Activated CD4-positive, alpha-beta T cell treated with anti-CD3 and anti-CD28 coated beads, Interleukin-2, amount 10 ng/mL, durations not matched to agents 24 days and 14 days (primary cell): ENCODE measurements at regions of chr1 and their contacts with region 1.

Region 1: GRCh38 chr1:100400404-100400803 is 48.1 kb downstream of the CDC14A start:
- DNase-seq: peak; percentile 90
- H3K4me3 Mint-ChIP-seq: peak overlapping the region; percentile 73
- H3K27ac Mint-ChIP-seq: peak overlapping the region; percentile 92
- H3K4me1 Mint-ChIP-seq: peaks cover 69% of the 10 kb centered on the region
- H3K27me3 Mint-ChIP-seq: no peaks in the 10 kb centered on the region

Region 2: DNA sequence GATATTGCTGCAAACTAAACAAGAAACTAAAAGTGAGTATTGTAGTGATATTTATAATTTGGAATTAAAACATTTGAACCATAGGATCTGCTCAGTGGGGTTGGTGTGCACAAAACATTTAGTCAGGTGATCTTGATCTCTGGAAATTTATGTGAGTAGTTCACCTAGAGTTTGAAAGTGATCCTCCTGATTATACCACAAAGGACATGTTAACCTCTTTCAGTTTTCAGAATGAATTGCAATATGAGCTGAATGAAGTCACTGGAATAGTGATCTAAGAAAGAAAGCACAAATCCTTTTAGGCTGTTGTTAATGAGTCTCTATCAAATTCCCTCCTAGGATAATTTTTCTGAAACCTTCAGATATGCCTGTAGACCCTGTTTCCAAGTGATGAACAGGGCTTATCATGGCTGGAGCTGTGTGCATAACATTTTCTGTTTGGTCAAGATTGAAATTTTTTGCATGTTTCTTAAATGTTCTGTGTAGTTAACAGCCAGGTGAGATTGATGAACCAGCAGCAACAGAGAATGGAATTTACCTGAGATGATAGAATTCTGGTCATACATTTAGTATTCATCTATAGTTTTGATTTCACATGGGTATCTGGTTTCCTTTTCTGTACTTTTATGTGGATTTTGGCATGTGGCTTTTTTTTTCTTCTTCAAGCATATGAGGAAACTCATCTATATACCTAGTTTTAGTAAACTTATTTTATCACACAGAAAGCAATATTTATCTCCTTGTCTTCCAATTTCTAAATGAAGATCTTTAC is 22.6 kb before region 1 on chr1:
- intact Hi-C with region 1: loop called (anchors 2 kb)
- DNase-seq: no peak
- H3K4me3 Mint-ChIP-seq: peak overlapping the region; percentile 61
- H3K27ac Mint-ChIP-seq: peak overlapping the region; percentile 88
- H3K4me1 Mint-ChIP-seq: peaks cover 36% of the 10 kb centered on the region
- H3K27me3 Mint-ChIP-seq: no peaks in the 10 kb centered on the region

Region 3: DNA sequence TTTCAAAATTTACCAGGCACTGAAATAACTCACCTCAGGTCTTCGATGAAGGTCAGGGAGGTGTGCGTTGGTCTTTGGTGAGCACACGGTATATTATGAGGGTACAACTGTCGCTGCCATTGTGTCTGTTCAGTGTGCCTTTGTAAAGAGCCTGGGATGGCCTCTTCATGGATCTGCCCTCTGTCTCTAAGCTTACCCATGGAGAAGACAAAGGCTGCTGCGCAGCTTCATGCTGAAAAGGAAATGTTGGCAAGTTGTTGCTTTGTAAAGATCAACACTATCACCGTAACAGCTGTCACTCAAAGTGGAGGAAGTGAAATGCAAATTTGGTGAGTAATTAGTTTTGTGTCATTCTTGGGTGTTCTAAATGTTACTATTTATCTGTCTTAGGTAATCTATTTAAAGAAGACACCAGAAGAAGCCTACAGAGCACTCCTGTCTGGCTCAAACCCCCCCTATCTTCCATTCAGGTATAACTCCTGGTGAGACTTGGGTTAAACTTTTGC is 23.5 kb after region 1 on chr1:
- intact Hi-C with region 1: loop called (anchors 2 kb)
- DNase-seq: peak; percentile 71
- H3K4me3 Mint-ChIP-seq: peak overlapping the region; percentile 58
- H3K27ac Mint-ChIP-seq: peak overlapping the region; percentile 77
- H3K4me1 Mint-ChIP-seq: peaks cover 39% of the 10 kb centered on the region
- H3K27me3 Mint-ChIP-seq: no peaks in the 10 kb centered on the region